H1 (cell line): ENCODE measurements at regions of chr5 and their contacts with region 1.

Region 1: GRCh38 chr5:149035372-149035790 is 27.5 kb downstream of the SH3TC2 start:
- DNase-seq: peak; percentile 41 to 80
- H3K4me3 ChIP-seq: no peak overlapping the region
- H3K27ac ChIP-seq: no peak overlapping the region
- H3K4me1 ChIP-seq: no peaks in the 10 kb centered on the region
- H3K27me3 ChIP-seq: no peaks in the 10 kb centered on the region
- CTCF ChIP-seq: peak; percentile 92 to 94 (median 94)
- EP300 ChIP-seq: no peak
- POLR2A ChIP-seq: no peak
- RAD21 ChIP-seq: peak; percentile 96 to 97

Region 2: GRCh38 chr5:148791334-148791667 is 244.1 kb before region 1 on chr5:
- CTCF ChIA-PET with region 1: interaction called, 11 read pairs
- POLR2A ChIA-PET with region 1: no interaction called
- DNase-seq: no peak
- H3K4me3 ChIP-seq: no peak overlapping the region
- H3K27ac ChIP-seq: no peak overlapping the region
- H3K4me1 ChIP-seq: no peaks in the 10 kb centered on the region
- H3K27me3 ChIP-seq: no peaks in the 10 kb centered on the region
- CTCF ChIP-seq: no peak
- EP300 ChIP-seq: no peak
- POLR2A ChIP-seq: no peak
- RAD21 ChIP-seq: no peak

Region 3: GRCh38 chr5:148855249-148856008 is 180.0 kb before region 1 on chr5:
- CTCF ChIA-PET with region 1: no interaction called
- POLR2A ChIA-PET with region 1: no interaction called
- DNase-seq: no peak
- H3K4me3 ChIP-seq: no peak overlapping the region
- H3K27ac ChIP-seq: no peak overlapping the region
- H3K4me1 ChIP-seq: no peaks in the 10 kb centered on the region
- H3K27me3 ChIP-seq: no peaks in the 10 kb centered on the region
- CTCF ChIP-seq: no peak
- EP300 ChIP-seq: no peak
- POLR2A ChIP-seq: no peak
- RAD21 ChIP-seq: no peak

Region 4: GRCh38 chr5:148949841-148950470 is 85.4 kb before region 1 on chr5:
- CTCF ChIA-PET with region 1: interaction called, 14 read pairs
- POLR2A ChIA-PET with region 1: no interaction called
- DNase-seq: no peak
- H3K4me3 ChIP-seq: no peak overlapping the region
- H3K27ac ChIP-seq: no peak overlapping the region
- H3K4me1 ChIP-seq: peaks cover 0 to 12% (median 8%) of the 10 kb centered on the region in 4 experiments; a peak in 5 of 7 replicates
- H3K27me3 ChIP-seq: no peaks in the 10 kb centered on the region
- CTCF ChIP-seq: no peak
- EP300 ChIP-seq: no peak
- POLR2A ChIP-seq: no peak
- RAD21 ChIP-seq: no peak

Region 5: GRCh38 chr5:149005077-149005892 is 30.1 kb before region 1 on chr5:
- CTCF ChIA-PET with region 1: interaction called, 27 read pairs
- POLR2A ChIA-PET with region 1: no interaction called
- DNase-seq: no peak
- H3K4me3 ChIP-seq: no peak overlapping the region
- H3K27ac ChIP-seq: no peak overlapping the region
- H3K4me1 ChIP-seq: no peaks in the 10 kb centered on the region; a peak in 1 of 7 replicates
- H3K27me3 ChIP-seq: no peaks in the 10 kb centered on the region
- CTCF ChIP-seq: no peak
- EP300 ChIP-seq: no peak
- POLR2A ChIP-seq: no peak
- RAD21 ChIP-seq: no peak

Region 6: DNA sequence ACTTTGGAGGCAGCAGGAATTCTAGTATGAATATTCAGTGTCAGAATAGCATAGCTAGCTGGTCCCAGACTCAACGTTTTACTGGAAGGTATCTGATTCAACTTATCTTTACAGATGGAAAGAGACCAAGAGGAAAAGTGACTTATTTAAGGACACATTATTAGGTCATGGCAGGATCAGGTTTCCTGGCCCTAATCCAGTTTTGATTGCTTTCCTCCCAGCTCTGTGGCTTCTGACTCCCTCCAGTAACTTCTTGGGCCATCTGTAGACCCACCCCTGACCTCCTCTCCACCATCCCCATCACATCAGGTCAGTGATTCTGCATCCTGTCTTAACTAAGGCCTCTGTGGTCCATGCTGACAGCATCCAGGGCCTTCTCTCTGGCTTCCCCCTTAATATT is 10.9 kb before region 1 on chr5:
- CTCF ChIA-PET with region 1: interaction called, 21 read pairs
- POLR2A ChIA-PET with region 1: no interaction called
- DNase-seq: no peak
- H3K4me3 ChIP-seq: no peak overlapping the region
- H3K27ac ChIP-seq: no peak overlapping the region
- H3K4me1 ChIP-seq: no peaks in the 10 kb centered on the region
- H3K27me3 ChIP-seq: no peaks in the 10 kb centered on the region
- CTCF ChIP-seq: no peak
- EP300 ChIP-seq: no peak
- POLR2A ChIP-seq: no peak
- RAD21 ChIP-seq: no peak

Region 7: GRCh38 chr5:149114403-149115312 is 79.3 kb after region 1 on chr5:
- CTCF ChIA-PET with region 1: interaction called, 121 read pairs
- POLR2A ChIA-PET with region 1: no interaction called
- DNase-seq: peak in 1 of 2 experiments; percentile 60
- H3K4me3 ChIP-seq: no peak overlapping the region
- H3K27ac ChIP-seq: no peak overlapping the region
- H3K4me1 ChIP-seq: no peaks in the 10 kb centered on the region
- H3K27me3 ChIP-seq: no peaks in the 10 kb centered on the region
- CTCF ChIP-seq: peak; percentile 63 to 96 (median 84)
- EP300 ChIP-seq: no peak
- POLR2A ChIP-seq: no peak
- RAD21 ChIP-seq: peak; percentile 90 to 97

Region 8: GRCh38 chr5:149162401-149163084 is 127.2 kb after region 1 on chr5:
- CTCF ChIA-PET with region 1: no interaction called
- POLR2A ChIA-PET with region 1: no interaction called
- DNase-seq: no peak
- H3K4me3 ChIP-seq: no peak overlapping the region
- H3K27ac ChIP-seq: no peak overlapping the region
- H3K4me1 ChIP-seq: no peaks in the 10 kb centered on the region
- H3K27me3 ChIP-seq: peaks cover 0 to under 1% (median 0%) of the 10 kb centered on the region in 4 experiments; a peak in 1 of 7 replicates
- CTCF ChIP-seq: no peak
- EP300 ChIP-seq: no peak
- POLR2A ChIP-seq: no peak
- RAD21 ChIP-seq: no peak